Activated naive CD4-positive, alpha-beta T cell treated with anti-CD3 and anti-CD28 coated beads, Interleukin-2, amount 10 ng/mL, durations not matched to agents 7 days and 5 days (primary cell): ENCODE measurements at regions of chr11 and their contacts with region 1.

Region 1: DNA sequence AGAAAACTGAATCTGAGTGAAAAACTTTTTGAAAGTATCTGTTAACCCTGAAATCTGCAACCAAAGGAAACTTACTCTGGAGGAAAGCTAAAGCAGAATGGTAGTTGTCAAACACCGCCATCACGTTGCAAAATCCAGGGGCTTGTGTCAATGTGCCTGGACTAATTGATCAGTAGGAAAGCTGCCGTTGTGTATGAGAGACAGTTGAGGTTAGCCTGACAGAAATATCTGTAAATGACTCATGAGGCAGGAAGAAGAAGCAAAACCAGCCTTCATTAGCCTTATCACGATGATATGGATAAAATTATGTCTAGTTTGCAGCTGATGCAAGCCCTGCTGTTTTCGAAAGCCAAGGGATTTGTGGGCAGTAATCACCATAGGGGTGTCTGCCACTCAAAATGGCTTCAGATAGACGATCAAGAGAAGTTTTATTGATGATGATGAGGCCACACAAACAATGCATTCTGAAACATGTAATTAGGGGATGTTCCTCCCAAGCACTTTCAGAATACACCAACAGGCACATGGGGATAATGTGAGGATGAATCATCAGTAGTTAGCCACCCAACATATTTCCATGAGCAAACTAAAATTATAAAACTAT is 8.9 kb downstream of the SCGB1A1 start:
- DNase-seq: no peak
- H3K4me3 Mint-ChIP-seq: no peak overlapping the region
- H3K27ac Mint-ChIP-seq: peak overlapping the region; percentile 86
- H3K4me1 Mint-ChIP-seq: peaks cover 61% of the 10 kb centered on the region
- H3K27me3 Mint-ChIP-seq: peaks cover 27% of the 10 kb centered on the region

Region 2: DNA sequence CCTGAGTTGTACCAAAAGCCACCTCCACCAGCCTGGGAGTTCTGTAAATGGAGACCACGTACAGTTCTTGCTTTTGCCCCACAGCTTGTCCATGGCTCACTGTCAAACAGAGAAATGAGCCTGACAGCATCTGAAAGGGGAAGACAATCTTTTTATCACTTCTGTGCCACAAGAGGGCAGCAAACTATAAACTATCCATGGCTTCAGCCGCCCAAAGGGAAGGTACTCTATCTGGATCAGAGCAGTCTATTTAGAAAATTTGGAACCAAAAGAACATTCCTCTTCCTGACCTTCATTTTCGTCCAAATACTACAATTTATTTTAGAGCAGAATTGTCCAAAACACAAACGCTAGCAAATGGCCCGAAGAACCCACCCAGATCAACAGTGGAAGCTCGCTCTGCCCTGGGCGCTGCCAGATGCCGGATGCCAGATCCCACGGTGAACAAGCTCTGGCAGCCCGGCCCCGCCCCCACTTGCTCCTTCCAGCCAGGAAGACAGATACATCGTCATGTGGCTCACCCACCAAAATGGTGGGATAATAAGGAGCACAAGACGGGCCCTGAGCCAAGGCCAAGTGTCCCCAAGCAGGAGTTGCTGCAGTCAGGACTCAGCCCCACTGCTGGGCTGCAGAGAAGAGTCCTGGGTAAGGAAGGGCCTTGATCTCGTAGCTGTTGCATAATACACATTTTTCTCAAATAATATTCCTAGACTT is 32.8 kb before region 1 on chr11:
- CTCF ChIA-PET with region 1: interaction called, 61 read pairs
- DNase-seq: peak; percentile 65
- H3K4me3 Mint-ChIP-seq: no peak overlapping the region
- H3K27ac Mint-ChIP-seq: no peak overlapping the region
- H3K4me1 Mint-ChIP-seq: peaks cover 41% of the 10 kb centered on the region
- H3K27me3 Mint-ChIP-seq: no peaks in the 10 kb centered on the region

Region 3: GRCh38 chr11:62411524-62411923 is 16.2 kb before region 1 on chr11:
- CTCF ChIA-PET with region 1: interaction called, 19 read pairs
- DNase-seq: no peak
- H3K4me3 Mint-ChIP-seq: no peak overlapping the region
- H3K27ac Mint-ChIP-seq: no peak overlapping the region
- H3K4me1 Mint-ChIP-seq: no peaks in the 10 kb centered on the region
- H3K27me3 Mint-ChIP-seq: peaks cover 26% of the 10 kb centered on the region

Region 4: GRCh38 chr11:62542750-62543567 is 115.2 kb after region 1 on chr11:
- CTCF ChIA-PET with region 1: interaction called, 161 read pairs
- DNase-seq: peak; percentile 80
- H3K4me3 Mint-ChIP-seq: peak overlapping the region; percentile 61
- H3K27ac Mint-ChIP-seq: peak overlapping the region; percentile 64
- H3K4me1 Mint-ChIP-seq: peaks cover 79% of the 10 kb centered on the region
- H3K27me3 Mint-ChIP-seq: peaks cover 30% of the 10 kb centered on the region

Region 5: GRCh38 chr11:62567018-62567633 is 139.4 kb after region 1 on chr11:
- CTCF ChIA-PET with region 1: interaction called, 12 read pairs
- DNase-seq: no peak
- H3K4me3 Mint-ChIP-seq: no peak overlapping the region
- H3K27ac Mint-ChIP-seq: no peak overlapping the region
- H3K4me1 Mint-ChIP-seq: peaks cover 48% of the 10 kb centered on the region
- H3K27me3 Mint-ChIP-seq: no peaks in the 10 kb centered on the region

Region 6: GRCh38 chr11:62591448-62592145 is 163.9 kb after region 1 on chr11 and contains the start of gene TUT1:
- CTCF ChIA-PET with region 1: interaction called, 17 read pairs
- DNase-seq: peak; percentile 98
- H3K4me3 Mint-ChIP-seq: peak within 1 kb of the TSS; percentile 100
- H3K27ac Mint-ChIP-seq: peak within 1 kb of the TSS; percentile 98
- H3K4me1 Mint-ChIP-seq: peaks cover 56% of the 10 kb centered on the region
- H3K27me3 Mint-ChIP-seq: no peaks in the 10 kb centered on the region